Heart right ventricle (tissue), 16 donors: ENCODE measurements at regions of chr19 and their contacts with region 1.

Region 1: DNA sequence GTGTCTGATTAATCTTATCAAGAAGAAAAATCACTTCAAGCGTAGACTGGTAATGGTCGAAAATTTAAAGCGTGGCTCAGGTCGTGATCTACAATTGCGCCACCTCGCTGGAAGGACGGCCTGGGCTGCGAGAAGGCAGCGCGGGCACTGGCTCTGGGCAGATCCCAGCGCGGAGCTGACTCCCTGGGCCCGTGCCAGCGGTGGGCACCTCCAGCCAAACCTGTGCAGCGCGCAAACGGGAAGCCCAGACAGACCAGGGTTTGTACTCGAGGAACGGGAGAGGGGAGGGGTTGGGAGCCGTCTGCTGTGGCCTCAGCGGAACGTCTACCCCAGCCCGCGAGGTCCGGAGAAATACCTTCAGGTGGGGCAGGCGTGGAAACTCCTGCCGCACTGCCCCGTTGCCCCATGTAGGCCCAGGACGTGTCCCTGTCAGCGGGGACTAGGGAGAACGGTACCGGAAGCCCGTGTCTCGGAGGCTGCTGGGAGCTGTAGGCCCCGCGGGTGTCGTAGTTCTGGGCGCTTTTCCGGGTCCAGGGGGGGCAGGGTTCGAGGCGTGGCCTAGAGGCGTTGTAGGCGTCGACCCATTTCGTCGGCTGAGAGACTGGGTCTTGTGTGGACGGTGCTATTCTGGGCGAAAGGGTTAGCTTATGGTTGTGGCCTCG is 21.1 kb downstream of the ZNF274 start:
- DNase-seq: no peak
- ATAC-seq: no peak
- H3K4me3 ChIP-seq: no peak overlapping the region
- H3K27ac ChIP-seq: no peak overlapping the region
- H3K4me1 ChIP-seq: no peaks in the 10 kb centered on the region
- H3K27me3 ChIP-seq: no peaks in the 10 kb centered on the region
- CTCF ChIP-seq: no peak

Region 2: GRCh38 chr19:58218899-58219298 is 15.0 kb after region 1 on chr19:
- intact Hi-C with region 1: no loop called
- DNase-seq: no peak
- ATAC-seq: no peak
- H3K4me3 ChIP-seq: no peak overlapping the region
- H3K27ac ChIP-seq: no peak overlapping the region
- H3K4me1 ChIP-seq: no peaks in the 10 kb centered on the region
- H3K27me3 ChIP-seq: no peaks in the 10 kb centered on the region
- CTCF ChIP-seq: peak in 5 of 9 donors; percentile 17 to 36 (median 20)

Region 3: GRCh38 chr19:58252102-58252685 is 48.2 kb after region 1 on chr19:
- intact Hi-C with region 1: loop called in 2 of 10 experiments (anchors 10 kb)
- DNase-seq: no peak
- ATAC-seq: no peak
- H3K4me3 ChIP-seq: no peak overlapping the region
- H3K27ac ChIP-seq: no peak overlapping the region
- H3K4me1 ChIP-seq: no peaks in the 10 kb centered on the region
- H3K27me3 ChIP-seq: no peaks in the 10 kb centered on the region
- CTCF ChIP-seq: no peak

Region 4: DNA sequence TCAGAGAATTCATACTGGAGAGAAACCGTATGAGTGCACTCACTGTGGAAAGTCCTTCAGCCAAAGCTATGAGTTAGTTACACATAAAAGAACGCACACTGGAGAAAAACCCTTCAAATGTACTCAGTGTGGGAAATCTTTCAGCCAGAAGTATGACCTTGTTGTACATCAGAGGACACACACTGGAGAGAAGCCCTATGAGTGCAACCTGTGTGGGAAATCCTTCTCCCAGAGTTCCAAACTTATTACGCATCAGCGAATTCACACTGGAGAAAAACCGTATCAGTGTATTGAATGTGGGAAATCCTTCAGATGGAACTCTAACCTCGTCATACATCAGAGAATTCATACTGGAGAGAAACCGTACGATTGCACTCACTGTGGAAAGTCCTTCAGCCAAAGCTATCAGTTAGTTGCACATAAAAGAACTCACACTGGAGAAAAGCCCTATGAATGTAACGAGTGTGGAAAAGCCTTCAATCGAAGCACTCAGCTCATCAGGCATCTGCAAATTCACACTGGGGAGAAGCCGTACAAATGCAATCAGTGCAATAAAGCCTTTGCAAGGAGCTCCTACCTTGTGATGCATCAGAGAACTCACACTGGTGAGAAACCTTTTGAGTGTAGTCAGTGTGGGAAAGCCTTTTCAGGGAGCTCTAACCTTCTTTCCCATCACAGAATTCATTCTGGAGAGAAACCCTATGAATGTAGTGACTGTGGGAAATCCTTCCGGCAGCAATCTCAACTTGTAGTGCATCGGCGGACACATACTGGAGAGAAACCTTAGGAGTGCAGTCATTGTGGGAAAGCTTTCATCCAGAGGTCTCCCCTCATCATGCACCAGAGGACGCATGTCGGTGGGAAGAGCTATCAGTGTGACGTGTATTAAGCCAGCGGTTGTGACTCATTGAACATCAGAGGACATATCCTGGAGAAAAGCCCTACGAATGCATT is 58.3 kb after region 1 on chr19:
- intact Hi-C with region 1: loop called in 7 of 10 experiments (anchors 5 to 10 kb)
- DNase-seq: no peak
- ATAC-seq: no peak
- H3K4me3 ChIP-seq: no peak overlapping the region
- H3K27ac ChIP-seq: no peak overlapping the region
- H3K4me1 ChIP-seq: no peaks in the 10 kb centered on the region
- H3K27me3 ChIP-seq: no peaks in the 10 kb centered on the region
- CTCF ChIP-seq: no peak

Region 5: DNA sequence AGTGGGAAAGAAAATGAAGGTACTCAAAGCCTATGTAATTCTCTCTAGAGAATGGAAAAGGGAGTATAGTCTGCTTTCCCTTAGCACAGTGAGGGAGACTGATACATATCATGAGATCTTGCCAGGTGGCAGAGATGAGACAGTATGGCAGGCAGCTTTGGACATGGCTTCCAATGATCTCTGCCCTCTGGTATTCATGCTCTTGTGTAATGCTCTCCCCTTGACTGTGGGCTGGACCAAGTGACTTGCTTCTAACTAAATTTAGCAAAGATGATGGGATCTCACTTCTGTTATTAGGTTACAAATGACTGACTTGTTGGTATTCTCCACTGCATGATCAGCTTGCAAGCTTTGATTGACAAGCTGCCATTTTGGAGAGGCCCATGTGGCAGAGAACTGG is 225.8 kb after region 1 on chr19:
- intact Hi-C with region 1: no loop called
- DNase-seq: no peak
- ATAC-seq: no peak
- H3K4me3 ChIP-seq: no peak overlapping the region
- H3K27ac ChIP-seq: no peak overlapping the region
- H3K4me1 ChIP-seq: no peaks in the 10 kb centered on the region
- H3K27me3 ChIP-seq: no peaks in the 10 kb centered on the region
- CTCF ChIP-seq: no peak